Psoas muscle (tissue), 8 donors: ENCODE measurements at regions of chr12 and their contacts with region 1.

Region 1: GRCh38 chr12:64672925-64673409 is 62.7 kb downstream of the RASSF3 start:
- DNase-seq: peak; percentile 23 to 57
- ATAC-seq: no peak
- H3K4me3 ChIP-seq: no peak overlapping the region
- H3K27ac ChIP-seq: peak overlapping the region; percentile 17
- H3K4me1 ChIP-seq: peaks cover 15% of the 10 kb centered on the region
- H3K27me3 ChIP-seq: no peaks in the 10 kb centered on the region
- CTCF ChIP-seq: no peak

Region 2: GRCh38 chr12:64522316-64522715 is 150.7 kb before region 1 on chr12:
- intact Hi-C with region 1: no loop called
- DNase-seq: no peak
- ATAC-seq: no peak
- H3K4me3 ChIP-seq: no peak overlapping the region
- H3K27ac ChIP-seq: no peak overlapping the region
- H3K4me1 ChIP-seq: no peaks in the 10 kb centered on the region
- H3K27me3 ChIP-seq: no peaks in the 10 kb centered on the region
- CTCF ChIP-seq: no peak

Region 3: GRCh38 chr12:64618953-64619590 is 53.9 kb before region 1 on chr12:
- intact Hi-C with region 1: loop called in 1 of 2 experiments (anchors 5 kb)
- DNase-seq: no peak
- ATAC-seq: peak in 2 of 4 donors; percentile 27 to 55
- H3K4me3 ChIP-seq: no peak overlapping the region
- H3K27ac ChIP-seq: no peak overlapping the region
- H3K4me1 ChIP-seq: peaks cover 10% of the 10 kb centered on the region
- H3K27me3 ChIP-seq: no peaks in the 10 kb centered on the region
- CTCF ChIP-seq: no peak

Region 4: DNA sequence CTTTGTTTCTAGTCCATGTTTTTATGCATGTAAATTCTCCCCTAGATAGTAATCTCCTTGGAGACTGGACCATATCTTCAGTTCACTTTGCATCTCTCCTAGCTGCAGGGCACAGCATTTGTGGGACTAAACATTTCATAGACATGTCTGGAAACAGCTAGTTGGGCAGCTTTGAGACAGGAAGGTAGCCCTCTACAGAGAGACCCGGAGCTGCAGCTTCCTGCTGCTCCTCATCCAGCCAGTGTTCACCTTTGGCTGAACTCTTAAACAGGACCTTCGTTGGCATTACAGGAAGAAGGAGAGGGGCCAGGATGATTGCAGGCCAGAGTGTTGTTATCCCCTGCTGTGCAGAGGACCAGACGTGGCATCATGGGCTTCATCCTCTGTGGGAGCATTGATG is 33.3 kb after region 1 on chr12:
- intact Hi-C with region 1: no loop called
- DNase-seq: no peak
- ATAC-seq: no peak
- H3K4me3 ChIP-seq: no peak overlapping the region
- H3K27ac ChIP-seq: no peak overlapping the region
- H3K4me1 ChIP-seq: peaks cover 6% of the 10 kb centered on the region
- H3K27me3 ChIP-seq: no peaks in the 10 kb centered on the region
- CTCF ChIP-seq: no peak